Astrocyte of the cerebellum (primary cell): ENCODE measurements at regions of chr3 and their contacts with region 1.

Region 1: DNA sequence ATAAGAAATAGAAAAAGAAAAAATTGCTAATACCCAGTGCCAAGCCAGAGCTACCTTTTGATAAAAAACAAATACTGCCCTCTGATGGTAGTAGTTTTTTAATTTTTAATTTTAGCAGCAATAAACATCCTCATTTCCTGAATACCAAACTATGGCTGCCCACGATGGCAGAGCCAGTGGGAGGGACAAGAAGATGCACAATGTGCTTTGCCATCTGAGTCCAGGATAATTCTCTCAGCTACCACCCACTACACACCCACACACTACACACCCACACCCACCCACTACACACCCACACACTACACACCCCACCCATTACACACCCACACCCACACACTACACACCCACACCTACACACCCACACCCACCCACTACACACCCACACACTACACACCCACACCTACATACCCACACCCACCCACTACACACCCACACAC is 17.8 kb downstream of the CEP19 start:
- DNase-seq: no peak
- H3K4me3 ChIP-seq: no peak overlapping the region
- CTCF ChIP-seq: no peak

Region 2: DNA sequence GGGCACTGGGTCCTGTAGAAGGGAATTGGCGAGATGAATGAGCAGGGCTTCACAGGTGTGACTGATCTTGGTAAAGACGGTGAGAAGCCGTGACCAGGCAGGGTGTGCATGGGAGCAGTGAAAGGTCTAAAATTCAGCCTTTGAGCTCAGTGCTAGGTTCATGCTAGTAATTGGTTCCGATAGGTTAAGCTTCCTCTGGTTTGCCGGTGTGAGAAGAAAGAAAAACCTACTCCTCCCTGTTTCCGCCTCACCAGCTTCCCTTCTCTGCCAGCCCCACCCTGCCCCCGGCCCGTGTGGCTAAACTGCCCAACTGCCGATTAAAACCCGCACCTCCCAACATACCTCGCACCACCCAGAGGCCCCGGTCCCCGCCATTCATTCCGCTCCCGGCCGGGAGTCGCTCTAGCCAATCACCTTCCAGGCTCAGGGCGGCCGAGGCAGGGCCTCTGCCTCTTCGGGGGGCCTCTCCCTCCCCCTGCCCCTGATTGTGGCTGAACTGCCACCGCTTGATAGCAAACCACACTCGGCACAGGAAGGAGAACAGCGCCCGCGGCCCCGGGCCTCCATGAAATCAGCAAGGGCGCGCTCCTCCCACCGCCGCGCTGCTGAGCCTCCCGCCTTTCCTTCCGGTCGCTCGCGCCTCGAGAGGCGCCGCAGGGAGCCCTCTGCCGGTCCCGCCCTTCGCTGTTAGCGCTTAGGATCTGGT is 62.0 kb before region 1 on chr3:
- in situ Hi-C with region 1: loop called (anchors 10 kb)
- DNase-seq: no peak
- H3K4me3 ChIP-seq: peak overlapping the region; percentile 56
- CTCF ChIP-seq: no peak

Region 3: GRCh38 chr3:196867507-196868296 is 173.5 kb after region 1 on chr3 and contains the start of gene SENP5:
- in situ Hi-C with region 1: loop called (anchors 10 kb)
- DNase-seq: peak; percentile 68
- H3K4me3 ChIP-seq: peak within 1 kb of the TSS; percentile 90
- CTCF ChIP-seq: no peak